Caco-2 (cell line): ENCODE measurements at regions of chr17 and their contacts with region 1.

Region 1: GRCh38 chr17:1628856-1629646 is 417 bp upstream of the SLC43A2 start:
- DNase-seq: peak; percentile 97 to 99
- H3K4me3 ChIP-seq: peak overlapping the region; percentile 90
- H3K4me3 Mint-ChIP-seq: peak overlapping the region; percentile 95
- H3K27ac Mint-ChIP-seq: peak overlapping the region; percentile 95
- H3K4me1 ChIP-seq: peaks cover 31% of the 10 kb centered on the region
- H3K4me1 Mint-ChIP-seq: peaks cover 23% of the 10 kb centered on the region
- H3K27me3 ChIP-seq: no peaks in the 10 kb centered on the region
- H3K27me3 Mint-ChIP-seq: peaks cover 2% of the 10 kb centered on the region
- CTCF ChIP-seq: peak in 1 of 2 experiments; percentile 38

Region 2: GRCh38 chr17:1516388-1517161 is 112.5 kb before region 1 on chr17 and contains the start of gene INPP5K:
- CTCF ChIA-PET with region 1: interaction called, 34 read pairs
- POLR2A ChIA-PET with region 1: interaction called, 4 read pairs
- intact Hi-C with region 1: loop called (anchors 2 kb)
- DNase-seq: peak; percentile 98
- H3K4me3 ChIP-seq: peak within 1 kb of the TSS; percentile 93
- H3K4me3 Mint-ChIP-seq: peak within 1 kb of the TSS; percentile 86
- H3K27ac Mint-ChIP-seq: peak within 1 kb of the TSS; percentile 87
- H3K4me1 ChIP-seq: peaks cover 13% of the 10 kb centered on the region
- H3K4me1 Mint-ChIP-seq: peaks cover 15% of the 10 kb centered on the region
- H3K27me3 ChIP-seq: no peaks in the 10 kb centered on the region
- H3K27me3 Mint-ChIP-seq: no peaks in the 10 kb centered on the region
- CTCF ChIP-seq: no peak
- total RNA-seq, gene INPP5K: 24.1 and 27.3 TPM in 2 replicates

Region 3: DNA sequence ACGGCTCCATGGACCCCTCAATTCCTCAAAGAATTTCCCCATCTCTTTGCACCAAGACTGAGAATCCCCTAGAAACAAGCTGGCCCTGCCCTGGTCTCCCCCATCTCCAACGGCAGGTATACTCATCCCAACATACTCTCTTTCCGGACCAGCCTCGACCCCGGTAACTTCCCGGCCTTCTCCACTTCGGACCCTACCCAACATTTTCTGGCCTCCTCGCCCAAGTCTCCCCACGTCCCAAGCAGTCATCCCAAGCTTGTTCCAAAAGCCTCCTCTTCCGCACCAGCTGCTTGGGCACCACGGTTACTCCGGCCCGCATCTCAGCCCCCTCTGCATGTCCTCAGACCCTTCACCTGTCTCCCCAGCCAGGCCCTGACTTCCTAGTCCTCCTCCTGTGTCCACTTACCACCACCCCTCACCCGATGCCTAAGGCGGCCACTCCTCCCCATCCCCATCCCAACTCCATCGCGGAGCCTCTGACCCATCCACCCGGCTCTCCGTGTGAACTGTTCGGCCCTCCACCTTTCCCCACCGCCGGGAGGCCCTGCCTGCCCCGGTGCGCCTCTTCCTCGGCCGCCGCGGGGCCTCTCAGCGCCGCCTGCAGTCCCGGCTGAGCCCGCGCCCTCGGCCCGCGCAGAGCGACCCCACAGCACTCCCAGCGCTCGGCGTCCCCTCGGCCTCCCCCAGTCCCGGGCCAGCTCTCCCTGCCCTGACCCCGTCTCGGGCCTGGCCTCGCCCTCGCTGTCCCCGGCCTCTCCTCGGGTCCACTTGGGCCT is 67.5 kb before region 1 on chr17:
- CTCF ChIA-PET with region 1: interaction called, 6 read pairs
- POLR2A ChIA-PET with region 1: interaction called, 5 read pairs
- intact Hi-C with region 1: loop called (anchors 1 kb)
- DNase-seq: peak; percentile 51 to 69
- H3K4me3 ChIP-seq: peak overlapping the region; percentile 96
- H3K4me3 Mint-ChIP-seq: peak overlapping the region; percentile 86
- H3K27ac Mint-ChIP-seq: peak overlapping the region; percentile 82
- H3K4me1 ChIP-seq: peaks cover 8% of the 10 kb centered on the region; the same call in 1 of the 2 replicates
- H3K4me1 Mint-ChIP-seq: peaks cover 29% of the 10 kb centered on the region
- H3K27me3 ChIP-seq: no peaks in the 10 kb centered on the region
- H3K27me3 Mint-ChIP-seq: no peaks in the 10 kb centered on the region
- CTCF ChIP-seq: peak; percentile 13 to 19

Region 4: GRCh38 chr17:1590031-1590748 is 38.9 kb before region 1 on chr17:
- CTCF ChIA-PET with region 1: interaction called, 15 read pairs
- POLR2A ChIA-PET with region 1: interaction called, 6 read pairs
- intact Hi-C with region 1: loop called (anchors 1 kb)
- DNase-seq: peak; percentile 85 to 92
- H3K4me3 ChIP-seq: no peak overlapping the region
- H3K4me3 Mint-ChIP-seq: peak overlapping the region; percentile 42
- H3K27ac Mint-ChIP-seq: peak overlapping the region; percentile 88
- H3K4me1 ChIP-seq: peaks cover 65% of the 10 kb centered on the region
- H3K4me1 Mint-ChIP-seq: peaks cover 17% of the 10 kb centered on the region
- H3K27me3 ChIP-seq: no peaks in the 10 kb centered on the region
- H3K27me3 Mint-ChIP-seq: no peaks in the 10 kb centered on the region
- CTCF ChIP-seq: no peak

Region 5: DNA sequence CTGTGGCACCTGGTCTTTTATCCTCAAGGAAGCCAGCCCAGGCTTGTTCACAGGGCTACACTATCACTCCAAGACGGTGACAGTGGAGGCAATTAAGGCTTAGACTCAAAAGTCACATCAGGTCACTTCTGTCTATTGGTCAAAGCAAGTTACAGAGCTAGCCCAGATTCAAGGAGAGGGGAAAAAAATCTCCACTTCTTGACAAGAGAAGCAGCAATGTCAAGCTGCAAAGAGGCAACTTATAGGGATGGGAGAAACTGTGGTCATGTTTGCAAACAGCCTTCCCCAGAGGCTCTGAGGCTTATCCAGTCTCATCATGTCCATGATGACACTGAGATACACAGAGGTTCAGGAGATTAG is 164.4 kb after region 1 on chr17:
- CTCF ChIA-PET with region 1: no interaction called
- POLR2A ChIA-PET with region 1: no interaction called
- intact Hi-C with region 1: no loop called
- DNase-seq: no peak
- H3K4me3 ChIP-seq: no peak overlapping the region
- H3K4me3 Mint-ChIP-seq: no peak overlapping the region
- H3K27ac Mint-ChIP-seq: no peak overlapping the region
- H3K4me1 ChIP-seq: no peaks in the 10 kb centered on the region
- H3K4me1 Mint-ChIP-seq: no peaks in the 10 kb centered on the region
- H3K27me3 ChIP-seq: no peaks in the 10 kb centered on the region
- H3K27me3 Mint-ChIP-seq: no peaks in the 10 kb centered on the region
- CTCF ChIP-seq: no peak

Region 6: GRCh38 chr17:1899403-1900000 is 270.5 kb after region 1 on chr17:
- CTCF ChIA-PET with region 1: no interaction called
- POLR2A ChIA-PET with region 1: no interaction called
- intact Hi-C with region 1: no loop called
- DNase-seq: no peak
- H3K4me3 ChIP-seq: no peak overlapping the region
- H3K4me3 Mint-ChIP-seq: no peak overlapping the region
- H3K27ac Mint-ChIP-seq: no peak overlapping the region
- H3K4me1 ChIP-seq: peaks cover 7% of the 10 kb centered on the region
- H3K4me1 Mint-ChIP-seq: peaks cover 7% of the 10 kb centered on the region
- H3K27me3 ChIP-seq: no peaks in the 10 kb centered on the region
- H3K27me3 Mint-ChIP-seq: no peaks in the 10 kb centered on the region
- CTCF ChIP-seq: peak; percentile 23 to 52